ENCODE measurements at regions of chr14 and their contacts with region 1.

Region 1: GRCh38 chr14:94364037-94364436 is 24.4 kb downstream of the SERPINA1 start:
- H3K4me3 Mint-ChIP-seq: no peak overlapping the region
- H3K27ac Mint-ChIP-seq: peak overlapping the region; percentile 2
- H3K4me1 Mint-ChIP-seq: peaks cover 28% of the 10 kb centered on the region
- H3K27me3 Mint-ChIP-seq: no peaks in the 10 kb centered on the region

Region 2: DNA sequence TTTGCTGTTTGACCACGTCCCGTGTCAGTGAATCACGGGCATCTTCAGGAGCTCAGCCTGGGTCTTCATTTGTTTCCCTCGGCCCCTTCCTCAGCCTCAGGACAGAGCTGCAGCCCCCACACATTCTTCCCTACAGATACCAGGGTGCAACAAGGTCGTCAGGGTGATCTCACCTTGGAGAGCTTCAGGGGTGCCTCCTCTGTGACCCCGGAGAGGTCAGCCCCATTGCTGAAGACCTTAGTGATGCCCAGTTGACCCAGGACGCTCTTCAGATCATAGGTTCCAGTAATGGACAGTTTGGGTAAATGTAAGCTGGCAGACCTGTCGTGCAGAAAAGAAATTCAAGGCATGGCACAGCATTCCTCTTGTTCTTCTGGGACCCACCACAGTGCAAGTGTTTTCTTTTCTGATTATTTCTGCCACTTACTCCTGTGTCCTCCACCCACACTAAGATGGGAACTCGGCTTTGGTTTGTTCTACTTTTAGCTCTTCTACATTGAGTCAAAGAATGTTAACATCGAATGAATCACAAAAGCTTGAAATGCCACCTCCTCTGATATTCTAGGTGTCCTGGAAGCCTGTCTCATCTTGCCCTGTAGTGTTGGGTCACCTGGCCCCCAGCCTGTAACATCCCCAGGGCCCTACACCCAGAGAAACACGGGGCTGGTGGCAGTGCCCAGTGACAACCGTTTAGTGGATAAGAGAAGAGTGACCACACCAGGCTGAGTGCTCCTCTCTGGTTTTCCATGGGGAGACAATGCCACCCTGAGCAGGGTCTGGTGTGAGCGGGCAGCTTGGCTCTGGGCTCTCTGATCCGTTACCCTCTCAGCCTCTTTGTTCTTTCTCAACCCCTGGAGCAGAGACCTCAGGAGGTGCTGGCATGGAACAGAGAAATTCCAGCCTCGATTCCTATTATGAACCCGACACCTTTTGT is 15.5 kb after region 1 on chr14:
- intact Hi-C with region 1: loop called (anchors 1 kb)
- H3K4me3 Mint-ChIP-seq: no peak overlapping the region
- H3K27ac Mint-ChIP-seq: peak overlapping the region; percentile 57
- H3K4me1 Mint-ChIP-seq: peaks cover 37% of the 10 kb centered on the region
- H3K27me3 Mint-ChIP-seq: no peaks in the 10 kb centered on the region